Activated CD4-positive, alpha-beta memory T cell treated with anti-CD3 and anti-CD28 coated beads, Interleukin-2, amount 10 ng/mL, durations not matched to agents 7 days and 5 days (primary cell): ENCODE measurements at regions of chr12 and their contacts with region 1.

Region 1: DNA sequence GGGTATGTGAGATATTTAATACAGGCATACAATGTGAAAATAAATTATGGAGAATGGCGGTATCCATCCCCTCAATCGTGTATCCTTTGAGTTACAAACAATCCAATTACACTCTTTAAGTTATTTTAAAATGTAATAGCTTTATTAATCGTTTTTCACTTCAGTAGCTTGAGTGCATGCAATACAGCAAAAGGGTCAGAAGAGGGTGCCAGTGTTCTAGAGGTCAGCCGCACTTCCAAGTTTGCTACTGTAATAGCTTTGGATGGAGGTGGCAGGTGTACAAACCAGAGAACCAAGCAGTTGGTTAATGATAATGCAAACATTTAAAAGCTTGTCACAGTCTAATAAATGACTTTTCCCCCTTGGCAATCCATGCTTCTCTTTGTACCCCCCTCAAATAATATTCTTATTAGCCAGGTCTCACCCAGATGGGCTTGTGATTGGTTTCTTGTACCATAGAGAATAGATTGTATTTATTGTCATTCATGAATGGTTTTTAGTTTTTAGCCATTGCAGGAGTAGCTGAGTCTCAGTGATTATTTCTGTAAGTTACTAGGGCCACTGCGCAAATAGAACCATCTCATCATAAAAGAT is 127.0 kb downstream of the ERC1 start:
- DNase-seq: peak; percentile 74
- H3K4me3 Mint-ChIP-seq: no peak overlapping the region
- H3K27ac Mint-ChIP-seq: no peak overlapping the region
- H3K4me1 Mint-ChIP-seq: peaks cover 18% of the 10 kb centered on the region
- H3K27me3 Mint-ChIP-seq: no peaks in the 10 kb centered on the region

Region 2: DNA sequence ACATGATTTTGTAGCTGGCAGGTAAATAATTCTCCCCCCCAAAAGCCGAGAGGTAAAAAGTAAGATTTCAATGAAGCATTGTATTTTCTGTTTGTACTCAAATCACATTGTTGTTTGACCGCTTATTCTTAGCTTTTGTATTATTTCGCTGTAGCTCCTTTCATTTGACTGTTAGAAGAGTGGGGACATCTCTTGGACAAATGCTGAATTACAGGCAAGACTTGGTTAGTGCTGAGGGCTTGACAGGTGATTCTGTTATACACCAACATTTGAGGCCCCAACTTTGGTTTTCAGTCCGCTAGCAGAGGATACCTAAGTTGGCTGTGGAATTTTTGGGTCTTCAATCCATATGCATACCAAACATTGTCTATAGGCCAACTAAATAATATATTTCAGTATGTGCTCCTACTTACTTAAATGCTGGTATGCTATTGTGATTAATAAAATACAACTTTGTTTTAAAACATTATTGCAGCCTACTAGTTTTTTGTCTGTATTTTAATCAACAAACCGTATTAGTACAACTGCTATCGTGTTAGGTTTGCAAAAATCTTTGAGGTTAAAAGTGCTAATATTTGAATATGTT is 24.8 kb before region 1 on chr12:
- CTCF ChIA-PET with region 1: interaction called, 11 read pairs
- POLR2A ChIA-PET with region 1: no interaction called
- DNase-seq: peak; percentile 24
- H3K4me3 Mint-ChIP-seq: no peak overlapping the region
- H3K27ac Mint-ChIP-seq: no peak overlapping the region
- H3K4me1 Mint-ChIP-seq: peaks cover 6% of the 10 kb centered on the region
- H3K27me3 Mint-ChIP-seq: no peaks in the 10 kb centered on the region

Region 3: GRCh38 chr12:1533602-1534304 is 415.7 kb after region 1 on chr12:
- CTCF ChIA-PET with region 1: interaction called, 22 read pairs
- POLR2A ChIA-PET with region 1: interaction called, 4 read pairs
- DNase-seq: peak; percentile 73
- H3K4me3 Mint-ChIP-seq: peak overlapping the region; percentile 62
- H3K27ac Mint-ChIP-seq: peak overlapping the region; percentile 17
- H3K4me1 Mint-ChIP-seq: peaks cover 38% of the 10 kb centered on the region
- H3K27me3 Mint-ChIP-seq: peaks cover 76% of the 10 kb centered on the region

Region 4: GRCh38 chr12:1583421-1584078 is 465.5 kb after region 1 on chr12:
- CTCF ChIA-PET with region 1: interaction called, 205 read pairs
- POLR2A ChIA-PET with region 1: interaction called, 19 read pairs
- DNase-seq: peak; percentile 67
- H3K4me3 Mint-ChIP-seq: no peak overlapping the region
- H3K27ac Mint-ChIP-seq: no peak overlapping the region
- H3K4me1 Mint-ChIP-seq: peaks cover 14% of the 10 kb centered on the region
- H3K27me3 Mint-ChIP-seq: no peaks in the 10 kb centered on the region

Region 5: DNA sequence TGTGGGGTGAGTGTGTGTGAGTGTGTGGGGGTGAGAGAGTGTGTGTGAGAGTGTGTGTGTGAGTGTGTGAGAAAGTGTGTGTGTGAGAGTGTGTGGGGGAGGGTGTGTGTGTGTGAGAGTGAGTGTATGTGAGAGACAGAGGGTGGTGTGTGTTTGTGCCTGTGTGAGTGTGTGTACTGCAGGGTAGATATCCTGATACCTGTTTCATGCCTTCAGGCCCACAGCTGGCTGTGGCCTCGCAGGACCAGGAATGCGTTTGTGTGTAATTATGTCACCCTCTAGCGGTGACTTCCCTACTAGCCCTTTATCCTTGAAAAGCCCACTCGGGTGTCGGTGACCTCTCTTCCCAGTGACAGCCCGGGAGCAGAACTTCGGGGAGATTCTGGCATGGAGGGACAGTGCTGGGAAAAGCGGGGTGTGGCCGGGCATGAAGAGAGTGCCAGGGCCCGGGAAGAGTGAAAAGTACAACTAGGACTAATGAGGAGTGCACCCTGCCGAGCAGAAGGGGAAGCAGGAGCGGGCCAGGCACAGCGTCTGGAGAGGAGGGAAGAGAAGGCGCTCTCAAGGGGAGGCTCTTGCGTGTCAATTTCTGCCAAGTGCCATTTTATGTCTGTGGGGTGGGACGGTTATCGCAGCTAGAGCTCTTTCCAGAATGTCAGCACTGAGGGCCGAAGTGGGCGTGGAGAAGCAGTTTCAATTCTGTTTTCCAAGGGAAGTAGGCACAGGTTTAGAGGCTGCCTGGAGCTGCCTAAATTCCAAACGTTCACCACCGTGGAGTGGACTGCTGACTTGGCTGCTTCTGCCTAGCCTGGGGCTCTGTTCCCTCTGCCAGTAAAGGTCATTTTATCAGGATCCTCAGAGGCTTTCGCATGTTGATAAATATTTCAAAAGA is 487.3 kb after region 1 on chr12:
- CTCF ChIA-PET with region 1: interaction called, 37 read pairs
- POLR2A ChIA-PET with region 1: interaction called, 3 read pairs
- DNase-seq: peak; percentile 60
- H3K4me3 Mint-ChIP-seq: peak overlapping the region; percentile 68
- H3K27ac Mint-ChIP-seq: peak overlapping the region; percentile 5
- H3K4me1 Mint-ChIP-seq: peaks cover 42% of the 10 kb centered on the region
- H3K27me3 Mint-ChIP-seq: no peaks in the 10 kb centered on the region